Activated CD4-positive, alpha-beta T cell treated with anti-CD3 and anti-CD28 coated beads, Interleukin-2, amount 10 ng/mL, durations not matched to agents 24 days and 14 days (primary cell): ENCODE measurements at regions of chr6 and their contacts with region 1.

Region 1: DNA sequence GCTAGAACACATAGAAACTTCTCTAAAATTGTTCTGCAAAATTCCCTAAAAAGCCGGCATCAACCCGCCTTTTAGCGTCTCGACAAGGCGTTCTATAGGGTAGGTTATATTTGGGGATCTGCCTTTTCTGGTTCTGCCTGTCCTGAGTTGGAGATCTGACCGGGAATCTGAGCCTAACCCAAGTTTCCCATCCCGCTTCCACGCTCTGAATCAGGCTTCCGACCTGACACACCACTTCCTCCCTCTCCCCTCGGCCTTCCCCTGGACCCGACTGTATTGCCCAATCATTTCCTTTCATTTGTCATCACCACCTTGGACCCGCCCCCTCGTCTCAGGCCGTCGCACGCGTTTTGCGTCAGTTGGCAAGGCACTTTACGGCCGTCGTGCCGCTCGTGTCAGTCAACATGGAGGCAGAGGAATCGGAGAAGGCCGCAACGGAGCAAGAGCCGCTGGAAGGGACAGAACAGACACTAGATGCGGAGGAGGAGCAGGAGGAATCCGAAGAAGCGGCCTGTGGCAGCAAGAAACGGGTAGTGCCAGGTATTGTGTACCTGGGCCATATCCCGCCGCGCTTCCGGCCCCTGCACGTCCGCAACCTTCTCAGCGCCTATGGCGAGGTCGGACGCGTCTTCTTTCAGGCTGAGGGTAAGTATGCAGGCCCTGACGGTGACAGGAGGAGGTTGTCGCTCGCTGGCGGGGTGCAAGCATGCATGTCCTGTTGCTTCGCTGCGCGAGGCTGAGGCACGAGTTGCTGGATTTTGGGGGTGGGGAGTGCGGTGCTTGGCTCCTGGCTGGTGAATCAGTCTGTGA is at the start of gene ABT1:
- DNase-seq: peak; percentile 99
- H3K4me3 Mint-ChIP-seq: no peak within 1 kb of the TSS
- H3K27ac Mint-ChIP-seq: no peak within 1 kb of the TSS
- H3K4me1 Mint-ChIP-seq: peaks cover 32% of the 10 kb centered on the region
- H3K27me3 Mint-ChIP-seq: peaks cover 28% of the 10 kb centered on the region
- total RNA-seq, gene ABT1: 31.9 and 32.1 TPM in 2 replicates

Region 2: DNA sequence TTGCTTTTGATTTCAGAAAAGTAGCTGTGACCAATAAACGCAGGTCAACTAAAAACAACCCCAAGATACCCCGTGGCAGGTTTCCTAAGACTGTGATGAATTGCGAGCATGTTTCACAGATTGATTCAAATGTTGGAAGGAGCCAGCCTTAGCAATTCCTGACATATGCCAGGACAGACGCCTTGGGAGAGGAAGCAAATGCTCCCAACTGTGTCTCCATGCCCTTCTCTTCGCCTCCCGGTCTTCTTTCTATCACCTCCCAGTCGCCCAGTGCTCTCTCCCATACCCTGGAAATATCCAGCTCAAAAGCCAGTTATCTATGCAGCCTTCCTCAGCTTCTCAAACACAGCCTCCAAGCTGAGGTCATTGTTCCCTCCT is 1982.8 kb before region 1 on chr6:
- intact Hi-C with region 1: no loop called
- DNase-seq: no peak
- H3K4me3 Mint-ChIP-seq: no peak overlapping the region
- H3K27ac Mint-ChIP-seq: no peak overlapping the region
- H3K4me1 Mint-ChIP-seq: no peaks in the 10 kb centered on the region
- H3K27me3 Mint-ChIP-seq: peaks cover 10% of the 10 kb centered on the region

Region 3: GRCh38 chr6:26163427-26164119 is 433.2 kb before region 1 on chr6:
- intact Hi-C with region 1: no loop called
- DNase-seq: no peak
- H3K4me3 Mint-ChIP-seq: no peak overlapping the region
- H3K27ac Mint-ChIP-seq: peak overlapping the region; percentile 76
- H3K4me1 Mint-ChIP-seq: peaks cover 51% of the 10 kb centered on the region
- H3K27me3 Mint-ChIP-seq: no peaks in the 10 kb centered on the region

Region 4: DNA sequence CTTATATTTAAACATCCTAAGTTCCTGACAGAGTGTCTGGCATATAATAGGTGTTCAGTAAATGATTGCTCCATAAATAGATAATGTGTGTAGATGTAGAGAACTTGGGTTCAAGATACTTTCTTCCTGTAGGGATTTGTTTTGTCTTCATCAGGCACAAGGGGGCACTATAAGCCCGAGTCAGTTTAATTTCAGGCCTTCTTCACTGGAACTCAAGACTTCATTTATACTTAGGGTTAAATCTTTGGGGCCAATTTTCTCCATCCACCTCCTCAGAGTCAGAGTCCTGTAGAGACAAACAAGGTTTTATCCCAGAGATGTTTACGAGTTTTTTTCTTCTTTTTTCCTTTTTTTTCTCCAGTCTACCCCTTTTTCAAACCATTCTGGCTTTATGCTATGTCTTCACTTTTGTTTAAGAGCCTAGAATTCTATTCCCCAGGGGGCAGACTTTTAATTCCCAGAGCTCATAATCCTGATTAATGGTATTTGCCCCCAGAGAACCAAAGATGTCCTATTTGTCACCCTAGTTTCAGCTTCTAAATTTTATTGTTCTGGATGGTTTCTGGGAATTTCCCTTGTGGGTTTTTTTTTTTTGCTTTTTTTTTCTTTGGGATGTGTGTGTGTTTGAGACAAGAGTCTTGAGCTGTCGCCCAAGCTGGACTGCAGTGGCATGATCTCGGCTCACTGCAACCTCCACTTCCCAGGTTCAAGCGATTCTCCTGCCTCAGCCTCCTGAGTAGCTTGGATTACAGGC is 421.2 kb before region 1 on chr6:
- intact Hi-C with region 1: loop called (anchors 1 kb)
- DNase-seq: peak; percentile 91
- H3K4me3 Mint-ChIP-seq: peak overlapping the region; percentile 40
- H3K27ac Mint-ChIP-seq: peak overlapping the region; percentile 63
- H3K4me1 Mint-ChIP-seq: peaks cover 45% of the 10 kb centered on the region
- H3K27me3 Mint-ChIP-seq: no peaks in the 10 kb centered on the region

Region 5: DNA sequence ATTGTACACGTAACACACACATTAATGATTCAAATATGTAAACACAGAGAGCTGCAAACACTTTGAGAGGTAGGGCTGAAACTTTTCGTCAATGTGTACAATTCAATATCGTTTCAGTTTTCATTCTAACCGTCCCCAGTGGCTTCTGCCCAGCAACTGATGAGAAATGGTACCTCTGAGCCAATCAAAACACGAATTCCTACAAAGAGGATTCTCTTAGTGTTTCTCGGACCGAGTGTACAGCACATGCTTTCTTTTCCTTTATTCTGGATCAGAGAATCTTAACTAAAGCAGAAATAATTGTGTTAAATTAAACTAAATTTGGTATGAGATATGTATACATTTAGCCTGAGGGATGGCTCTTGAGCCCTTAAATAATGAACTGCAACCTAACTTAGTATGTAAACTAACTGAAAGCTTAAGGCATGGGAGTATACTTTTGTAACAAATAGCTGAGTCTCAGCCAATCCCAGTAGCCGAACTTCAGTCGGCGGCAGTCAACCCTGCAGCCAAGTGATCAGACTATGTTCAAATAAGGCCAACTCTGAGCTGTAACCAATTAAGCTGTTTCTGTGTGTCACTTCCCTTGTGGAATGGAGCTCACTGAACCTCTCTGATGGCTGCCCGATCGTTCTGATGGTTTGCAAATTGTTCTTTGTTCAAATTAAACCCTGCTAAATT is 122.9 kb before region 1 on chr6:
- intact Hi-C with region 1: loop called (anchors 2 kb)
- DNase-seq: peak; percentile 95
- H3K4me3 Mint-ChIP-seq: peak overlapping the region; percentile 96
- H3K27ac Mint-ChIP-seq: peak overlapping the region; percentile 100
- H3K4me1 Mint-ChIP-seq: peaks cover 30% of the 10 kb centered on the region
- H3K27me3 Mint-ChIP-seq: no peaks in the 10 kb centered on the region

Region 6: GRCh38 chr6:26568601-26569432 is 28.0 kb before region 1 on chr6:
- intact Hi-C with region 1: loop called (anchors 1 kb)
- DNase-seq: peak; percentile 99
- H3K4me3 Mint-ChIP-seq: peak overlapping the region; percentile 88
- H3K27ac Mint-ChIP-seq: peak overlapping the region; percentile 88
- H3K4me1 Mint-ChIP-seq: peaks cover 32% of the 10 kb centered on the region
- H3K27me3 Mint-ChIP-seq: peaks cover 5% of the 10 kb centered on the region

Region 7: GRCh38 chr6:27472617-27473400 is 876.0 kb after region 1 on chr6 and contains the start of gene ZNF184:
- intact Hi-C with region 1: loop called (anchors 5 kb)
- DNase-seq: peak; percentile 97
- H3K4me3 Mint-ChIP-seq: peak within 1 kb of the TSS; percentile 89
- H3K27ac Mint-ChIP-seq: peak within 1 kb of the TSS; percentile 98
- H3K4me1 Mint-ChIP-seq: peaks cover 41% of the 10 kb centered on the region
- H3K27me3 Mint-ChIP-seq: peaks cover 2% of the 10 kb centered on the region
- total RNA-seq, gene ZNF184: 7.9 and 8.2 TPM in 2 replicates